Activated CD4-positive, alpha-beta memory T cell treated with anti-CD3 and anti-CD28 coated beads for 36 hours (primary cell): ENCODE measurements at regions of chr14 and their contacts with region 1.

Region 1: GRCh38 chr14:101823511-101824120 is 62.1 kb downstream of the PPP2R5C start:
- DNase-seq: peak; percentile 90
- H3K4me3 Mint-ChIP-seq: peak overlapping the region; percentile 83
- H3K27ac Mint-ChIP-seq: peak overlapping the region; percentile 99
- H3K4me1 Mint-ChIP-seq: peaks cover 82% of the 10 kb centered on the region
- H3K27me3 Mint-ChIP-seq: no peaks in the 10 kb centered on the region

Region 2: GRCh38 chr14:100067971-100068959 is 1755.4 kb before region 1 on chr14:
- CTCF ChIA-PET with region 1: no interaction called
- POLR2A ChIA-PET with region 1: no interaction called
- intact Hi-C with region 1: loop called (anchors 5 kb)
- DNase-seq: peak; percentile 95
- H3K4me3 Mint-ChIP-seq: peak overlapping the region; percentile 81
- H3K27ac Mint-ChIP-seq: peak overlapping the region; percentile 98
- H3K4me1 Mint-ChIP-seq: peaks cover 81% of the 10 kb centered on the region
- H3K27me3 Mint-ChIP-seq: no peaks in the 10 kb centered on the region

Region 3: GRCh38 chr14:101731187-101732080 is 92.2 kb before region 1 on chr14:
- CTCF ChIA-PET with region 1: interaction called, 3 read pairs
- POLR2A ChIA-PET with region 1: interaction called, 10 read pairs
- intact Hi-C with region 1: loop called (anchors 1 kb)
- DNase-seq: peak; percentile 94
- H3K4me3 Mint-ChIP-seq: peak overlapping the region; percentile 74
- H3K27ac Mint-ChIP-seq: peak overlapping the region; percentile 97
- H3K4me1 Mint-ChIP-seq: peaks cover 61% of the 10 kb centered on the region
- H3K27me3 Mint-ChIP-seq: no peaks in the 10 kb centered on the region

Region 4: GRCh38 chr14:101809671-101810514 is 13.7 kb before region 1 on chr14:
- CTCF ChIA-PET with region 1: interaction called, 59 read pairs
- POLR2A ChIA-PET with region 1: interaction called, 229 read pairs
- intact Hi-C with region 1: loop called (anchors 1 kb)
- DNase-seq: peak; percentile 91
- H3K4me3 Mint-ChIP-seq: peak overlapping the region; percentile 86
- H3K27ac Mint-ChIP-seq: peak overlapping the region; percentile 98
- H3K4me1 Mint-ChIP-seq: peaks cover 49% of the 10 kb centered on the region
- H3K27me3 Mint-ChIP-seq: no peaks in the 10 kb centered on the region

Region 5: DNA sequence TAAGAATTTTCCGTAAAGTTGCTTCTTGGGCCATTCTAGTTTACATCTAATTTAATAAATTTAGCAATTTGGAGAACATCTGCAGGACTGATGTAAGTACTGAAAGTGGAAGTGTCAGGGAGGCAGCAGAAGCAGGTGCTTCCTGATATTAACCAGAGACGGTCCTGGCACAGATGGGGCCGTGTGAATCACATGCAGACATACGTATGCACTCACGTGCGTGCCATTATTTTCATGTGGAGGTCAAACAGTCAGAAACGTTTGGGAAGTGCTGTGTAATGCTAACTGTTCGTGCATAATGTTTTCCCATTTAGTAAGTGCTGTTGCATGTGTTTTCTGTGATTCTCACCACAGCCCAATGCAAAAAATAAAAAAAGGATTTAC is 52.9 kb after region 1 on chr14:
- CTCF ChIA-PET with region 1: interaction called, 10 read pairs
- POLR2A ChIA-PET with region 1: interaction called, 56 read pairs
- intact Hi-C with region 1: loop called (anchors 1 kb)
- DNase-seq: peak; percentile 87
- H3K4me3 Mint-ChIP-seq: peak overlapping the region; percentile 56
- H3K27ac Mint-ChIP-seq: peak overlapping the region; percentile 84
- H3K4me1 Mint-ChIP-seq: peaks cover 91% of the 10 kb centered on the region
- H3K27me3 Mint-ChIP-seq: no peaks in the 10 kb centered on the region

Region 6: GRCh38 chr14:102034301-102034700 is 210.7 kb after region 1 on chr14:
- CTCF ChIA-PET with region 1: no interaction called
- POLR2A ChIA-PET with region 1: no interaction called
- intact Hi-C with region 1: no loop called
- DNase-seq: no peak
- H3K4me3 Mint-ChIP-seq: no peak overlapping the region
- H3K27ac Mint-ChIP-seq: no peak overlapping the region
- H3K4me1 Mint-ChIP-seq: no peaks in the 10 kb centered on the region
- H3K27me3 Mint-ChIP-seq: no peaks in the 10 kb centered on the region

Region 7: GRCh38 chr14:102086972-102087761 is 263.6 kb after region 1 on chr14 and contains the start of gene HSP90AA1:
- CTCF ChIA-PET with region 1: interaction called, 3 read pairs
- POLR2A ChIA-PET with region 1: no interaction called
- intact Hi-C with region 1: loop called (anchors 5 kb)
- DNase-seq: peak; percentile 96
- H3K4me3 Mint-ChIP-seq: peak within 1 kb of the TSS; percentile 84
- H3K27ac Mint-ChIP-seq: peak within 1 kb of the TSS; percentile 94
- H3K4me1 Mint-ChIP-seq: peaks cover 43% of the 10 kb centered on the region
- H3K27me3 Mint-ChIP-seq: no peaks in the 10 kb centered on the region
- total RNA-seq, gene HSP90AA1: 1,107 to 1,148 TPM